ENCODE measurements at regions of chr16 and their contacts with region 1.

Region 1: GRCh38 chr16:58582971-58583765 is 46.5 kb downstream of the CNOT1 start:
- DNase-seq: no peak
- H3K4me3 ChIP-seq: no peak overlapping the region
- H3K27ac ChIP-seq: no peak overlapping the region
- H3K4me1 ChIP-seq: no peaks in the 10 kb centered on the region
- H3K27me3 ChIP-seq: no peaks in the 10 kb centered on the region
- CTCF ChIP-seq: no peak

Region 2: DNA sequence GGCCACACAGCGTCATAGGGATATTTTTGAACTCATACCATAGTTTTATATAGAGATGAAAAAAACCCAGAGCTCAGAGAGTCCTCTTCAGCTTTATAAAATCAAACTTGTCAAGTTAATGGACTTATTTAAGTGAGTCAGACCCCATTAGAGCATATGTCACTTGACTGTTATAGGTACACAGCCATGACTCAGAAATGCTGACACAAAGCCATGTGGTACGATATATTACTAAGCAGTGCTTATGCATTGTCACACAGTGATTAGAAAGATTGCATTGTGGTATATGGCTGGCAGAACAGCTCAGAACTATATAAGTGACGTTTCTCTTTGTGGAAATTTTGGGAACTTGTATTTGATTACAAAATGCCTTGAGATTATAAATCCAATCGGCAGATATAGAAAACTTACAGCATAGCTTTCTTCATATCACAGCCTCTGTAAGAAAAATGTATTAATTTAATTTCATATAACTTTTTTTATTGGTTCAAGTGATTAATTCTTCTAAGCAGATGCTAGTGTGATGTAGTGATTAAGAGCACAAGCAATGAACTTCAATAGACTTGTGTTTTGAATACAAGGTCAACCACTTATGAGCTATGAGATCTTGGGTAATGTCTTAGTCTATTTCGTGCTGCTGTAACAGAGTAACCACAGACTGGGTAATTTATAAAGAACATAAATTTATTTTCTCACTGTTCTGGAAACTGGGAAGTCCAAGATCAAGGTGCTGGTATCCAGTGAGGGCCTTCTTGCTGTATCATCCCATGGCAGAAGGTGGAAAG is 216.7 kb before region 1 on chr16:
- CTCF ChIA-PET with region 1: no interaction called
- POLR2A ChIA-PET with region 1: no interaction called
- intact Hi-C with region 1: no loop called
- DNase-seq: peak; percentile 7 to 94
- H3K4me3 ChIP-seq: no peak overlapping the region
- H3K27ac ChIP-seq: peak overlapping the region; percentile 44
- H3K4me1 ChIP-seq: peaks cover 17% of the 10 kb centered on the region
- H3K27me3 ChIP-seq: no peaks in the 10 kb centered on the region
- CTCF ChIP-seq: no peak

Region 3: DNA sequence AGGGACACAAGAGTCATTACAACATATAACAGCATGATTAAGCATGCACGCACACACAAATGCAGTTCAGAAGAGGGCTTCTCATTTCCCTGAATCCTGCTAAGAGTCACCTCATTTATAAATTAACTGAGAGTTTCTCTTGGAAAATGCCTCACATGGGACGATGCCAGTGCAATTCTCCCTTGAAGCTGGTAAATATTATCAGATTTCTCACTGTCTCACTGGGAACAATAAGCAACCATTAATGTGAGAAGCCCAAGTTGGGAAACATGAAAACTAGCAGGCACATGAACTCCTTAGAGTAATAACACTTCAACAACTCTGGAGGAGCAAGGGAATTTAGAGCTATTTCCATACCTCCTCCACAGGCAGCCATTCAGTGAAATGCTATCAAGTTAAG is 41.5 kb before region 1 on chr16:
- CTCF ChIA-PET with region 1: no interaction called
- POLR2A ChIA-PET with region 1: no interaction called
- intact Hi-C with region 1: loop called (anchors 5 kb)
- DNase-seq: no peak
- H3K4me3 ChIP-seq: no peak overlapping the region
- H3K27ac ChIP-seq: no peak overlapping the region
- H3K4me1 ChIP-seq: no peaks in the 10 kb centered on the region
- H3K27me3 ChIP-seq: no peaks in the 10 kb centered on the region
- CTCF ChIP-seq: no peak

Region 4: GRCh38 chr16:58727796-58728568 is 144.8 kb after region 1 on chr16:
- CTCF ChIA-PET with region 1: no interaction called
- POLR2A ChIA-PET with region 1: no interaction called
- intact Hi-C with region 1: loop called (anchors 5 kb)
- DNase-seq: no peak
- H3K4me3 ChIP-seq: no peak overlapping the region
- H3K27ac ChIP-seq: no peak overlapping the region
- H3K4me1 ChIP-seq: peaks cover 18% of the 10 kb centered on the region
- H3K27me3 ChIP-seq: no peaks in the 10 kb centered on the region
- CTCF ChIP-seq: no peak